ENCODE measurements at regions of chr3 and their contacts with region 1.

Region 1: GRCh38 chr3:4978204-4978965 is 852 bp upstream of the BHLHE40 start:
- DNase-seq: peak; percentile 96 to 99
- ATAC-seq: peak; percentile 75 to 88 (median 80)
- H3K4me3 ChIP-seq: peak overlapping the region; percentile 47 to 98 (median 86)
- H3K27ac ChIP-seq: peak overlapping the region; percentile 97 to 100 (median 100)
- H3K4me1 ChIP-seq: peaks cover 4 to 48% (median 34%) of the 10 kb centered on the region in 9 donors
- H3K27me3 ChIP-seq: no peaks in the 10 kb centered on the region
- CTCF ChIP-seq: peak in 2 of 9 donors; percentile 8 to 17

Region 2: DNA sequence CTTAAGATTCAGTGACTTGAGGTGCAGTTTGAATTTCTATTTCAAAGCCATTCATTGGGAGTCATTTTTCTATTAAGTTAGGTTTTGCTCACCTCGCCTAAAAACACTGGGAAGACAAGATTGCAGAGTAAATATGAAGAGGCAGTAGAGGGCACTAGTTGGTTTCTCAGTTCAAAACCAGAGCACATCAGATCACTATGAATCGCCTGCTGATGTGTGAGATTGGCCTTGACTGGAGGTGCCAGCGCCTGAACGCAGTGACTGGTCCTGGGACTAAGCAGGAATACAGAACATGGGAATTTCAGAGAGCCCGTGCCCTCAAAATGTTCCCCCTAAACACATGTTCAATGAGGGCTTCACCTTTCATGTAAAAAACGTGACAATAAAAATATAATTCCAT is 256.3 kb before region 1 on chr3:
- intact Hi-C with region 1: loop called in 9 of 10 experiments (anchors 2 to 5 kb)
- DNase-seq: peak; percentile 37 to 41
- ATAC-seq: peak; percentile 59 to 84 (median 68)
- H3K4me3 ChIP-seq: no peak overlapping the region
- H3K27ac ChIP-seq: peak overlapping the region in 7 of 10 donors; percentile 19 to 79 (median 74)
- H3K4me1 ChIP-seq: peaks cover 12 to 69% (median 44%) of the 10 kb centered on the region in 9 donors
- H3K27me3 ChIP-seq: no peaks in the 10 kb centered on the region
- CTCF ChIP-seq: peak in 8 of 9 donors; percentile 8 to 67 (median 52)

Region 3: GRCh38 chr3:4826237-4827100 is 151.9 kb before region 1 on chr3:
- intact Hi-C with region 1: loop called in 7 of 10 experiments (anchors 1 to 5 kb)
- DNase-seq: peak; percentile 85 to 87
- ATAC-seq: peak; percentile 85 to 96 (median 90)
- H3K4me3 ChIP-seq: peak overlapping the region in 4 of 10 donors; percentile 5 to 16 (median 10)
- H3K27ac ChIP-seq: peak overlapping the region; percentile 21 to 92 (median 85)
- H3K4me1 ChIP-seq: peaks cover 16 to 84% (median 44%) of the 10 kb centered on the region in 9 donors
- H3K27me3 ChIP-seq: no peaks in the 10 kb centered on the region
- CTCF ChIP-seq: no peak

Region 4: DNA sequence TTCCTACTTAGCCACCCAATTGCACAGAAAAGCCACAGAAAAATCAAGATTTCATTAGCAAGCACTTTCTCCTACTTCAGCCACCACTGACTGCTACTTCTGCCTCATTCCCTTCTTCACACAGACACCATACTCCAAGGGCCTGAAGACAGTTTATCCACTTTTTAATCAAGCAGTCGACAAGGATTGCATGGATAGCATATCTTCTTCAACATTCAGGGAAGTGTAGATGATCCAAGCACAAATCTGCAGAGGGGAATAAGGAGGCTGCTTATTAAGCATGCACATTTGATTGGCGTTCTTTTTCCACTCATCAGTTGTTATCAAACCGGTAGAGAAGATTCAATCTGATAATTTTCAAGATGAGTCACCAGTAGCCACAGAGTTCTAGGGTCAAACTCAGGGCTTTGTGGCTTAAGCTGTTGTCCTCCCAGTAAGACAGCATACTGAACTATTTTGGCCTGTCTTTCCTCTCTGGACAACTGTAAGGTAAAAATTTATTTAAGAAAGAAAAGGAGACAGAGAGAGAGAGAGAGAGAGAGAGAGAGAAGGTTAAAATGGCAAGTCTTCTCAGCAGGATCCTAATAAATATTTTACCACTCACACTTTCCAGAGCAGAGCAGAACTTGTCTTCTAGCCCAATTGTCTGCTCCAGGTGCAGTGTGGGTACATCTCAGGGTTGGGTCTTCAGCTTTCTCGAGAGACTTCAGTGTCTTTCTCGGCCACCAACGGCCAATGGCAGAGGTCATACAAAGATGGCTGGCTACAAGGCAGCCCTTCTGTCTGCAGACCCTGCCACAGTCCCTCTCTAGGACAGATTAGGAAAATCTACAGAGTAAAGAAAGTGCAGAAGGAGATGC is 79.7 kb before region 1 on chr3:
- intact Hi-C with region 1: loop called in 1 of 10 experiments (anchors 10 kb)
- DNase-seq: no peak
- ATAC-seq: no peak
- H3K4me3 ChIP-seq: no peak overlapping the region
- H3K27ac ChIP-seq: peak overlapping the region in 7 of 10 donors; percentile 10 to 63 (median 46)
- H3K4me1 ChIP-seq: peaks cover 0 to 21% (median 0%) of the 10 kb centered on the region in 9 donors
- H3K27me3 ChIP-seq: no peaks in the 10 kb centered on the region
- CTCF ChIP-seq: no peak

Region 5: GRCh38 chr3:5026331-5027218 is 48.2 kb after region 1 on chr3:
- intact Hi-C with region 1: loop called in 7 of 10 experiments (anchors 1 to 2 kb)
- DNase-seq: peak; percentile 92 to 93
- ATAC-seq: peak; percentile 91 to 97 (median 95)
- H3K4me3 ChIP-seq: peak overlapping the region; percentile 8 to 63 (median 53)
- H3K27ac ChIP-seq: peak overlapping the region; percentile 75 to 94 (median 86)
- H3K4me1 ChIP-seq: peaks cover 0 to 23% (median 5%) of the 10 kb centered on the region in 9 donors
- H3K27me3 ChIP-seq: no peaks in the 10 kb centered on the region
- CTCF ChIP-seq: peak; percentile 51 to 76 (median 68)

Region 6: DNA sequence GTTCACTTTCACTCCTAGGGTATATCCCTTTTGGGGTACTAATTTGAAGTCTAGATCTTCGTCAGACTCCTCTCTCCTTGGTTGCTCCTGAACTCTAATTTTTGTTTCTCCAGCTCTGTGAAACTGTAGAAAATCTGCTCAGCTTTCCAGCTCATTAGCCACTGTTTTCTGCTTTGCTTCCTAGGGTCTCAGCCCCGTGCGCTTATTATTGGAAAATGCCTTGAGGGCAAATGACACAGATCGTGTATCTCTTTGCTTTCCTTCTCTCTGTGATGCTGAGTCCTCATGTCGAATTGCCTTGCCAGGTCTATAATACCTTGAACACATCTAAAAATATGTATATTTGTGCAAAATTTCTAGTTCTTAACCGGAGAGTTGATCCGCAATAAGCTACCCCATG is 940.2 kb after region 1 on chr3:
- intact Hi-C with region 1: no loop called
- DNase-seq: no peak
- ATAC-seq: no peak
- H3K4me3 ChIP-seq: no peak overlapping the region
- H3K27ac ChIP-seq: no peak overlapping the region
- H3K4me1 ChIP-seq: no peaks in the 10 kb centered on the region
- H3K27me3 ChIP-seq: no peaks in the 10 kb centered on the region
- CTCF ChIP-seq: no peak

Measured in heart right ventricle (tissue), 16 donors.